ENCODE measurements at regions of chr14 and their contacts with region 1.

Region 1: GRCh38 chr14:103333754-103334643 is at the start of gene EIF5:
- DNase-seq: peak; percentile 97 to 100 (median 99)
- ATAC-seq: peak; percentile 88
- H3K4me3 Mint-ChIP-seq: peak within 1 kb of the TSS; percentile 88 to 99 (median 94)
- H3K27ac Mint-ChIP-seq: peak within 1 kb of the TSS; percentile 95 to 99 (median 98)
- H3K4me1 Mint-ChIP-seq: peaks cover 13 to 57% (median 37%) of the 10 kb centered on the region in 4 donors
- H3K27me3 Mint-ChIP-seq: peaks cover 0 to 2% (median 0%) of the 10 kb centered on the region in 5 donors
- polyA plus RNA-seq, gene EIF5: 283 to 332 (median 317) TPM

Region 2: GRCh38 chr14:102928412-102929240 is 405.4 kb before region 1 on chr14:
- POLR2A ChIA-PET with region 1: no interaction called
- DNase-seq: peak; percentile 71 to 94 (median 84)
- ATAC-seq: peak; percentile 81 to 87
- H3K4me3 Mint-ChIP-seq: peak overlapping the region; percentile 70 to 85 (median 80)
- H3K27ac Mint-ChIP-seq: peak overlapping the region in 5 of 10 donors; percentile 33 to 83 (median 55)
- H3K4me1 Mint-ChIP-seq: peaks cover 0 to 20% (median 11%) of the 10 kb centered on the region in 4 donors
- H3K27me3 Mint-ChIP-seq: peaks cover 4 to 16% (median 10%) of the 10 kb centered on the region in 5 donors

Region 3: DNA sequence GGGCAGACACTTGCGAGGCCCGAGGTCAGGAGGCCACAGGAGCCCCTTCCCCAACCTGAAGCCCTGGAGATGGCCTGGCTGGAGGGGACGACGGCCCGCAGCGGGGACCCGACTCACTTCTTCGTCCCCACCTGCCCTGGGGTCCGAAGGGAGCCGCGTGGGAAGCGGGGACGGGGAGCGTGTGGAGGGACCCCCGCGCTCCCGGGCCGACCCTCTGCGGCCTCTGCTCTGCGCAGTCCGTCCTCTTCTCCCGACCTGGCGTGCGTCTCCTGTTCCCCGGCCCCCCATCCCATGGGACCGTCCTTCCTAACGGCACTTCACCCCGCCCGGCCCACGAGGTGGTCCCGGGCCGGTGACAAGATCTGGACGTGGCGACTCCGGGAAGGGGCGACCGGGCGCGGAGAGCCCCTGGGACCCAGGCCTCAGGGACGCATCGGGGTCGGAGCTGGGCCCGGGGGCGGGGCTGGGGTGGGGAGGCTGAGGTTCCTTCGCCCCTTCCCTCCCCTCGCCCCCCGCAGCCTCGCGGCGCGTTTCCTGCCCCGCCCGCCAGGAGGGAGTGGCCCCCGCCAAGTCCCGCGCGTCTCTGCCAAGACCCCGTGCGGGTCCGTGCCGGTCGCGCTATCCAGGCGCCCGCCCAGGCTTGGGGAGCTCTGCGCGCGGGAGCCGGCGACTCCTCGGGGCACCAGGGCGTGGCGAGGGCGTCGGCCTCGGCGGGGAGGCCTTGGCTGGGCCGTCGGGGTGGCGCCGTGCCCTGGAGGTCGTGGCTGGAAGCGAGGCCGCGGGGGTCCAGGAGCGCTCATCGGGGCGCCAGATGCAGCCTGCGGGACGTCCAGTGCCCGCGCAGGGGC is 113.6 kb before region 1 on chr14:
- POLR2A ChIA-PET with region 1: no interaction called
- DNase-seq: no peak
- ATAC-seq: no peak
- H3K4me3 Mint-ChIP-seq: peak overlapping the region in 3 of 10 donors; percentile 38 to 56 (median 45)
- H3K27ac Mint-ChIP-seq: no peak overlapping the region
- H3K4me1 Mint-ChIP-seq: peaks cover 0 to 7% (median 3%) of the 10 kb centered on the region in 4 donors
- H3K27me3 Mint-ChIP-seq: peaks cover 19 to 67% (median 37%) of the 10 kb centered on the region in 5 donors

Region 4: DNA sequence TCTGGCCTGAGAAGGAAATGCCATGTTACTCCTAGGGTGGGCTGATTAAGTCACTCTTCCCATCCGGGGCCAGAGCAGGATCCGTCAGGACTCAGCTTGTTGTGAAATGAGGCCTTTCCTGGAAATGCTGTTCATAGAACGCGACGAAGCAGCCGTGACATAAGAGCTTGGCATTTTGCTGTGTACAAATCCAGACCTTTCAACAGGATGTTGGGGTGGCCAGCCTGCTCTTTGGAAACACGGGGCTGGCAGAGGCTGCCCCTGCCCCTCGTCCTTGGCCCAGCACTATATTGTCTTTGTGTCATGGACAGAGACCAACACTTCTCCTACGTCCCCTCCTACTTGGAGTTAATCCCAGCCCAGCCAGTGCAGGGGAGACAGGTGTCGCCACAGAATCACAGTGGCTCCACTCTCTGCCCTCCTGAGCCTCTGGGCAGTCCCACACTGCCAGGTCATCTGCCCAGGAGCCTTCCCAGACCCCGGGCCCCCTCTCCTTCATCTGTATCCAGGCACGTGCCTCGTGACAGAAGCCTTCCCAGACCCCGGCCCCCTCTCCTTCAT is 18.6 kb before region 1 on chr14:
- POLR2A ChIA-PET with region 1: no interaction called
- DNase-seq: no peak
- ATAC-seq: no peak
- H3K4me3 Mint-ChIP-seq: no peak overlapping the region
- H3K27ac Mint-ChIP-seq: no peak overlapping the region
- H3K4me1 Mint-ChIP-seq: peaks cover 0 to 6% (median 1%) of the 10 kb centered on the region in 4 donors
- H3K27me3 Mint-ChIP-seq: peaks cover 4 to 34% (median 19%) of the 10 kb centered on the region in 5 donors

Region 5: DNA sequence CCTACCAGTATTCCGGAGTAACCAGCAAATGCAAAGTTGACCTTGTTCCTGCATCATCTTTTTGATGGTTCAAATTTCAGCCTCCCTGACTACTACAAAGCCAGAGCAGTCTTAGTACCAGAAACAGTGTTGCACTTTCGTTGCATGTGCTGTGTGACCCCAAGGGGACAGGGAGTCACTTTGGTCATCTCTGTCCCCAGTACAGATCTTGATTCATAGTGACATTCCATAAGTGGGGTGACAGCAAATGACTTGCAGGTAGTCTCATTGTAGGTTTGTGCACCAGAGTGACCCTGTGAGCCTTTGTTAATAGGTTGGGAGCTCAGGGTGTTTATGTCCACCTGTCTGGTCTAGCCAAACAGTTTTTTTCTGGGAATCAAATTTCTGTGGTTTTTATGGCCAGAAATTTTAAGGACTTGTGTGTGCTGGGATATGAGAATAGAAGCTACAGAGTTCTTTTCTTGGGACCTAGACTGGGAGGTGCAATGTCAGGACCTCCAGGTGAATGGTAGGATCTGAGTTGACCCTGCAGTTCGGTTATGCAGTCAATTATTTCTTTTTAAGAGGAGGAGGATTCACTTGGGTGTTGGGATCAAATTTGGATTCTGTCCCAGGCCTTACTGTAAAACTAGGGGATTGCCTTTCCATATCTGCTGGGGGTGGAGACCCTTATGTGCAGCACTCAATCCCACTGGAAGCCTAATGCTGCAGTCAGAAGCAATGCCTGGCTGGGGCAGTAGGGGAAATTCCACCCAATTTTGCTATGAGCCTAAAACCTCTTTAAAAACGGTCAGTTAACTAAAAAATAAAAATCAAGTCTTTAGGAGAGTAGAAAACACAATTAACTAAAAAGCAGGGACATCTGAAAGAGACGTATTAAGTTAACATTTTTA is 10.2 kb after region 1 on chr14:
- POLR2A ChIA-PET with region 1: interaction called, 16 read pairs
- DNase-seq: no peak
- ATAC-seq: peak; percentile 2 to 15
- H3K4me3 Mint-ChIP-seq: peak overlapping the region in 1 of 10 donors; percentile 34
- H3K27ac Mint-ChIP-seq: peak overlapping the region in 6 of 10 donors; percentile 10 to 85 (median 63)
- H3K4me1 Mint-ChIP-seq: peaks cover 10 to 39% (median 24%) of the 10 kb centered on the region in 4 donors
- H3K27me3 Mint-ChIP-seq: no peaks in the 10 kb centered on the region

Region 6: GRCh38 chr14:103385152-103385993 is 51.4 kb after region 1 on chr14 and contains the start of gene MARK3:
- POLR2A ChIA-PET with region 1: interaction called, 50 read pairs
- DNase-seq: peak; percentile 90 to 98 (median 96)
- ATAC-seq: peak; percentile 88
- H3K4me3 Mint-ChIP-seq: peak within 1 kb of the TSS; percentile 92 to 99 (median 96)
- H3K27ac Mint-ChIP-seq: peak within 1 kb of the TSS; percentile 89 to 98 (median 96)
- H3K4me1 Mint-ChIP-seq: peaks cover 10 to 53% (median 40%) of the 10 kb centered on the region in 4 donors
- H3K27me3 Mint-ChIP-seq: peaks cover 1 to 8% (median 4%) of the 10 kb centered on the region in 5 donors
- polyA plus RNA-seq, gene MARK3: 26.8 to 36.5 (median 30.7) TPM

Region 7: GRCh38 chr14:103391048-103391447 is 57.0 kb after region 1 on chr14:
- POLR2A ChIA-PET with region 1: interaction called, 17 read pairs
- DNase-seq: peak; percentile 12 to 73 (median 48)
- ATAC-seq: peak; percentile 72 to 85
- H3K4me3 Mint-ChIP-seq: peak overlapping the region in 5 of 10 donors; percentile 23 to 41 (median 35)
- H3K27ac Mint-ChIP-seq: peak overlapping the region in 9 of 10 donors; percentile 33 to 92 (median 76)
- H3K4me1 Mint-ChIP-seq: peaks cover 27 to 85% (median 64%) of the 10 kb centered on the region in 4 donors
- H3K27me3 Mint-ChIP-seq: no peaks in the 10 kb centered on the region

Region 8: GRCh38 chr14:103528587-103529382 is 194.8 kb after region 1 on chr14 and contains the start of gene TRMT61A:
- POLR2A ChIA-PET with region 1: interaction called, 12 read pairs
- DNase-seq: peak; percentile 61 to 86 (median 74)
- ATAC-seq: peak; percentile 92
- H3K4me3 Mint-ChIP-seq: peak within 1 kb of the TSS; percentile 88 to 95 (median 93)
- H3K27ac Mint-ChIP-seq: peak within 1 kb of the TSS; percentile 86 to 98 (median 96)
- H3K4me1 Mint-ChIP-seq: peaks cover 19 to 52% (median 42%) of the 10 kb centered on the region in 4 donors
- H3K27me3 Mint-ChIP-seq: peaks cover 0 to 3% (median 0%) of the 10 kb centered on the region in 5 donors
- polyA plus RNA-seq, gene TRMT61A: 6.7 to 11.2 (median 7.0) TPM

Region 9: GRCh38 chr14:103562429-103563225 is 228.6 kb after region 1 on chr14 and contains the starts of genes BAG5 and COA8:
- POLR2A ChIA-PET with region 1: interaction called, 15 read pairs
- DNase-seq: peak; percentile 77 to 97 (median 86)
- ATAC-seq: peak; percentile 87
- H3K4me3 Mint-ChIP-seq: peak within 1 kb of the TSS; percentile 87 to 98 (median 94)
- H3K27ac Mint-ChIP-seq: peak within 1 kb of the TSS; percentile 91 to 96 (median 94)
- H3K4me1 Mint-ChIP-seq: peaks cover 22 to 73% (median 52%) of the 10 kb centered on the region in 4 donors
- H3K27me3 Mint-ChIP-seq: no peaks in the 10 kb centered on the region
- polyA plus RNA-seq, gene BAG5: 39.0 to 48.5 (median 47.5) TPM
- polyA plus RNA-seq, gene COA8: 47.3 to 72.0 (median 48.2) TPM